Prostate gland (tissue), 2 donors: ENCODE measurements at regions of chr13 and their contacts with region 1.

Region 1: DNA sequence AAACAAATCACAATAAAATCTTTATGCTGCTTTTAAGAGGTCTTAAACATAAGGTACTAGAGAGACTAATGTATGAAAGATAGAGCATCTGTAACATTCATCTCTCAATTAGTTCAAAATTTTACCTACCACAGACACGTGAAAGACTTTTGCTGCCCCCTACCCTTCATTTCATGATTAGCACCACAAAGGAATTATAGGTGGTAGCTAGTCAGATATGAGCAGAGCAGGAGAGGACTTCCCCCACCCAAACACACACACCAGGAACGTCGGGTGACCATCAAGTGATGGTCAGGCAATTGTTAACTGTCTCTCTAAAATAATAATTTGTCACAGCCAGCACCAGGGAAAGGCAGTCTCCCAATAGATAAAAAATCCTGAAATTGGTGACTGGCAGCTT is 1531.7 kb upstream of the SPRY2 start:
- DNase-seq: no peak
- H3K4me3 ChIP-seq: no peak overlapping the region
- H3K27ac ChIP-seq: no peak overlapping the region
- H3K4me1 ChIP-seq: no peaks in the 10 kb centered on the region
- H3K27me3 ChIP-seq: no peaks in the 10 kb centered on the region
- CTCF ChIP-seq: peak in 1 of 4 experiments; percentile 26
- POLR2A ChIP-seq: no peak

Region 2: GRCh38 chr13:81171065-81171647 is 701.4 kb before region 1 on chr13:
- intact Hi-C with region 1: loop called (anchors 10 kb)
- DNase-seq: no peak
- H3K4me3 ChIP-seq: no peak overlapping the region
- H3K27ac ChIP-seq: no peak overlapping the region
- H3K4me1 ChIP-seq: no peaks in the 10 kb centered on the region
- H3K27me3 ChIP-seq: no peaks in the 10 kb centered on the region
- CTCF ChIP-seq: peak; percentile 24 to 62 (median 52)
- POLR2A ChIP-seq: no peak